GM10248 (cell line): ENCODE measurements at regions of chr1 and their contacts with region 1.

Region 1: DNA sequence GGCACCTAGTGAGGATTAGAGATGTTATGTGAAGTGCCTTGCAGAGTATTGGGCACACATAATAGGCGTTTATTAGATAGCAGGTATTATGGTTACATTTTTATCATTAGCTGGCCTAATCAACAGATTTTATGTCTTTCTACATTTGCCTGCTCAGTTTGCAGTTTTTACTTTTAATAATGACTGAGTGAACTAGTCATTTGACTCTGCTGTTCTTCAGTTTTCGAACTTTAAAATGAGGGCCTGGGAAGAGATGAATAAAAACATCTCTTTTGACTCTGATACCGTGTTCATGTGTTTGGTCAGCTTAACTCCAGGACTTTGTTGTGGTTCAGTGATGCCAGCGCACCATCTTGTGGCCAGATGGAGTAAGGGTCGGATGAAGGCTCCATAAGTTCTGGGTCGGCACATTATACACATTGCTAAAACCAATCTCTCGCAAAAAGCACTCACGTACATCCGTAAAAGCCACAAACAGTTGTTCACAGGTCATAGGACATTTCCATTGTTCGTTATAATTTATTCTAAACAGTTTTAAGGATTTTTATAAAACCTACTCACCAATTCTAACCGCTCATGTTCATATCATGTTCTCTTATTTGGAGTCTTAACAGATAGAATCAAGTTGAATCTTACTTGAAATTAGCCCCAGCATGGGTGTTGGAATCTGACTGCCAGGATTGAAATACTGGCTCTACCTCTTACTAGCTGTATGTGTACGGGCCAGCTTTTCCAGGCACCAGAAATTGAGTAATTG is 78.4 kb upstream of the GPR88 start:
- DNase-seq: peak; percentile 58
- CTCF ChIP-seq: peak; percentile 86

Region 2: GRCh38 chr1:99786751-99787501 is 672.6 kb before region 1 on chr1:
- CTCF ChIA-PET with region 1: interaction called, 11 read pairs
- POLR2A ChIA-PET with region 1: no interaction called
- DNase-seq: peak; percentile 32
- CTCF ChIP-seq: no peak

Region 3: GRCh38 chr1:100351095-100351891 is 108.2 kb before region 1 on chr1:
- CTCF ChIA-PET with region 1: interaction called, 10 read pairs
- POLR2A ChIA-PET with region 1: no interaction called
- DNase-seq: peak; percentile 82
- CTCF ChIP-seq: peak; percentile 62

Region 4: GRCh38 chr1:100430325-100430813 is 29.2 kb before region 1 on chr1:
- CTCF ChIA-PET with region 1: interaction called, 38 read pairs
- POLR2A ChIA-PET with region 1: no interaction called
- DNase-seq: no peak
- CTCF ChIP-seq: no peak

Region 5: DNA sequence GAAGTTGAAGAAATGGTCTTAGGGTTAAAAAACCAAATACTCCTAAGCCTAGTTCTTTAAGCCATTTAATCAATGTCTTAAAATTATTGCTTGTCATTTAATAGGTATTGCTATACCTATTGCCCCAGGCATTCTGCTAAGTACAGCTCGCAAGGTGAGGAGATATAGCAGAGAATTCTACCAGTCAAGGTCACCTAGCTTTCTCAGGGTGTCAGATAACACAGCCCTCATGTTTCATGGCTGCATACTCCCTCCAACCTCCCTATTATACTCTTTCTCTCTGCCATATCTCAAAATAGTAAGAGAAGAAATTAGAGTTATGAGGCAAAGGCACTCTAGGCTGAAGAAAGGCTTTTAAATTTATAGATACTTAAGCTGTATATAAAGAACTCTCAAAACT is 10.0 kb after region 1 on chr1:
- CTCF ChIA-PET with region 1: interaction called, 33 read pairs
- POLR2A ChIA-PET with region 1: no interaction called
- DNase-seq: no peak
- CTCF ChIP-seq: no peak

Region 6: DNA sequence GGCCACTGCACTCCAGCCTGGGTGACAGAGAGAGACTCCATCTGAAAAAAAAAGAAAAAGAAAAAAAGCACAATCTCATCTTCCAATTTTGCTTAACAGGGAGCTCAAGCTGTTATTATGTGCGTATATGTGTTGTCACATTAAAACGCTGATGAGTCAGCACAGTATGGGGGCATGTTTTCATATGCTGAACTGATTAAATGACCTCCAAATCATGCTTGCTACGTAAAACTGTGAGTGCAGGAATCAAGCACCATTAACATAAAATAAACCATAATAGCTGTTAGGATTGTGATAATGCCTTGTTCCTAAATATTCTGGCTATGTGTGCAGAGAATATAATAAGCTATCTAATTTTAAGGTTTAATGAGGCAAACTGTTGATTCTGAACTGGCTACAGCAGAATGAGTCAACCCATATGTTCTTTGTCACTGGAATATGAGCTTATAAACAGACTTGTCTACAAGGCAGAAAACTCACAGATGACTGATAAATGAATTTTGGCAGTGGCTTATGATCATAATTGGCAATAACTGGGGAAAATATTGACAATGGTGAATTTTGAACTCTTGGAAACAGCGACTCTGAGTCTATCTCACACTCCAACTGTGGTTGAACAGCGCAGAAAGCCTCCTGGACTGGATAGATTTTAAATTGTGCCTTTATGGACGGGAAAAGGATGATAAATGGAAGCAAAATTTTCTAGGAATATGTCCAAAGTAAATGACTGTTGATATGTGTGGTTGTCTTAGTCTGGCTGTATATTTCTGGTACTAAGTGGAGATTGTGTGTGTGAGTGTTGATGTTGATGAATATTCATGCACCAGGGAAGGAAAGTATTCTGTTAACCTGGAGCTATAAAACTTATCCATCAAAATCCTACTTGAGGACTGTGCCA is 335.5 kb after region 1 on chr1:
- CTCF ChIA-PET with region 1: no interaction called
- POLR2A ChIA-PET with region 1: no interaction called
- DNase-seq: no peak
- CTCF ChIP-seq: no peak

Region 7: DNA sequence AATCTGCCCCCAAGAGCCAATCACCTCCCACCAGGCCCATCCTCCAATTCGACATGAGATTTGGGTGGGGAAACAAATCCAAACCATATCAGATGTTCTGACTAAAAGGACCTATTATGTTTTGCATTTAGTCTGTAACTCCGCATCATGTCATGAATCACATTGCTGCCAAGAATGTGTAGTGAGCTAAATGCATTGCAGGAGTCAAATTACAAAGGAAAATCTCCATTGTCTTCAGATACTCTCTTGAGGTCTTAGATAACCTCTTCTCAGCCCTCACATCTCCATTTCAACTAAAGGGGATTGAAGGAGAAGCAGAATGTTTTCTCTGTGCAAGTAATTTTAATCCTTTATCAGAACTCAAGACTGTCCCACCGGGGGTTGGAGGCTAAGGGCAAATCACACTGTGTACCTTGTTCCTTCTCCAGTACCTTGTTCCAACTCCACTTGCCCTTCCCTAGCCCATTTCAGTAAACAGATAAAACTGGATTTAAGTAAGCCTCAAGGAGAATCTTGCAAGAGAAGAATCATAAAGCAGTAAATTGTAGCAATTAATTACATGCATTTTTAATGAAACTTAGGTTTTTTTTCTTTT is 401.0 kb after region 1 on chr1:
- CTCF ChIA-PET with region 1: interaction called, 17 read pairs
- POLR2A ChIA-PET with region 1: no interaction called
- DNase-seq: no peak
- CTCF ChIP-seq: no peak

Region 8: DNA sequence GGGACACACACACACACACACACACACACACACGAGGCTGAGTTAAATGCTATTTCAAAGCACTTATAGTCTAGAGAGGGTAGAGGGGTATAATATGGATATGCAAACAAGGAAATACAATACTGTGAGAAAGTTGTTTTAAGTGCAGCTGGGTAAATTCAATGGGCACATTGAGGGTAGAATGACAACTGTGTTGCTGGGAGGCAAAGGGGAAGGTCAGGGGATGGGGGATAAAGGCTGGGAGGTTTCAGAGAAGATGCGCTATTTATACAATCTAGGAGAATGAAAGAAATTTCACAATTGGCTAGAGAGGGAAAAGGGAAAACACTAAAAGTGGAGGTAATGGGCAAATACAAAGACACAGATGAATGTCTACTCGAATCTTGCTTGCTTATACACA is 415.7 kb after region 1 on chr1:
- CTCF ChIA-PET with region 1: interaction called, 81 read pairs
- POLR2A ChIA-PET with region 1: no interaction called
- DNase-seq: no peak
- CTCF ChIP-seq: no peak